PC-3 (cell line): ENCODE measurements at regions of chr3 and their contacts with region 1.

Region 1: GRCh38 chr3:189324538-189325138 is 152.9 kb downstream of the TPRG1 start:
- DNase-seq: peak; percentile 99
- ATAC-seq: peak; percentile 96
- H3K4me3 ChIP-seq: no peak overlapping the region
- H3K27ac ChIP-seq: peak overlapping the region; percentile 85
- H3K4me1 ChIP-seq: peaks cover 26% of the 10 kb centered on the region
- H3K27me3 ChIP-seq: no peaks in the 10 kb centered on the region
- CTCF ChIP-seq: no peak

Region 2: DNA sequence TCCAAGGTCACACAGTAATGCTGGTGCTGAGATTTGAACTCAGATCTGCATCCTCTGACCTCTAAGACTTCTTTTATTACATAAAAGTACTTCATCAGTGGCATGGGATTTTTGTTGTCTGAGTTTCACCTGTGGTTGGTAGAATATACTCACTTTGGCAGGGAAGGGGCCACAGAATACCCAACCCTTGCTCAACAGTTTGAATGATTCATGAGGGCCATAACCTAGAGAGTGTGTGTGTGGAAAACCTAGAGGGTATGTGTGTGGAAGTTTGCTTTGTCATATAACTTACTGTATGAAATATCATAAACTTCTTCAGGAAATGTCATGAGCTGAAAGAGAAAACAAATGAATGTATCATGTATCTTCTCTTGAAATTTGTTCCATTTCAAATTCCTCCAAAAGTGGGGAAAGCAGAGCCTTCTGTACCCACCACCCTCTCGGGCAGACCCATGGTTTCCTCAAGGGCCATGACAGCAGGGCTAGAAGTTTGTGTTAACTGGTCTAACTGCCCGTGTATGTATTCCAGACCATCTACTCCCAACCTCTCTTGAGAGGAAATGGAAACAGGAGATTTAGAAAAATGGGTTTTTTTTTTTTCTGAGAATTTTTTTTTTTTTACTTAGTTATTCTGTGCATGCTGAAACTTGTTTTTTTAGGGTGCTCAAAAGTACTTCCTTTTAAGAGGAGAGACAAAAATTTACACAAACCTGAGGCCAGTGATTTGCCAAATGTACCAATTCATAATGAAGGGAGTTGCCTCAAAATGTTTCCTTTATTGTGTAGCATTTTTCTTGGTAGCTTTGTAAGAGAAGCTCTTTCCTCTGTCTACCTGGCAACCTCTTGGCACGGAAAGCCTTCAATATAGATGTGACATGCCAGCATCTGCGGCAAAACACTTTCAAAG is 25.9 kb before region 1 on chr3:
- CTCF ChIA-PET with region 1: interaction called, 3 read pairs
- POLR2A ChIA-PET with region 1: interaction called, 3 read pairs
- intact Hi-C with region 1: loop called (anchors 1 kb)
- DNase-seq: peak; percentile 89
- ATAC-seq: peak; percentile 45
- H3K4me3 ChIP-seq: no peak overlapping the region
- H3K27ac ChIP-seq: peak overlapping the region; percentile 81
- H3K4me1 ChIP-seq: peaks cover 47% of the 10 kb centered on the region
- H3K27me3 ChIP-seq: no peaks in the 10 kb centered on the region
- CTCF ChIP-seq: no peak

Region 3: GRCh38 chr3:189383630-189384029 is 59.0 kb after region 1 on chr3:
- CTCF ChIA-PET with region 1: no interaction called
- POLR2A ChIA-PET with region 1: no interaction called
- intact Hi-C with region 1: no loop called
- DNase-seq: no peak
- ATAC-seq: no peak
- H3K4me3 ChIP-seq: no peak overlapping the region
- H3K27ac ChIP-seq: no peak overlapping the region
- H3K4me1 ChIP-seq: no peaks in the 10 kb centered on the region
- H3K27me3 ChIP-seq: no peaks in the 10 kb centered on the region
- CTCF ChIP-seq: no peak

Region 4: GRCh38 chr3:189394599-189395121 is 70.0 kb after region 1 on chr3:
- CTCF ChIA-PET with region 1: no interaction called
- POLR2A ChIA-PET with region 1: interaction called, 8 read pairs
- intact Hi-C with region 1: loop called (anchors 1 kb)
- DNase-seq: no peak
- ATAC-seq: no peak
- H3K4me3 ChIP-seq: no peak overlapping the region
- H3K27ac ChIP-seq: no peak overlapping the region
- H3K4me1 ChIP-seq: peaks cover 20% of the 10 kb centered on the region
- H3K27me3 ChIP-seq: no peaks in the 10 kb centered on the region
- CTCF ChIP-seq: no peak

Region 5: DNA sequence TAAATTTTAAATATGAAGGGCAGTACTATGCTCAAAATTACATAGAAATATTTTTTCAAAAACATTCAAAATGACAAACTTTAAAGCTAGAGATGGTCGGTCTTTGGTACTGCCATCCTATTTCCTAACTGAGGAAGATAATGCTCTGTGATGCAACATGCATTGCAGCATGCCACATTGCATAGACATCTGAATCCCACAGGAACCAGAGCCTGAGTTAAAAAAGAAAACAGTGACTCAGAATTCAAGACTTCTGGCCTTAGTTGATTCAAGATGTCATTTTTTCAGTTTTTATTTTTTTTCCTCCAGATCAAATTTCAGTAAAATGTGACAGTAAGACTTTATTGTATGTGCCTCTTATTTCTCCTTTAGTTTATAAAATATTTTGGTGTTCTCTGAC is 339.7 kb after region 1 on chr3:
- CTCF ChIA-PET with region 1: no interaction called
- POLR2A ChIA-PET with region 1: no interaction called
- intact Hi-C with region 1: loop called (anchors 10 kb)
- DNase-seq: peak; percentile 91
- ATAC-seq: peak; percentile 99
- H3K4me3 ChIP-seq: no peak overlapping the region
- H3K27ac ChIP-seq: peak overlapping the region; percentile 7; the same call in 1 of the 2 replicates
- H3K4me1 ChIP-seq: peaks cover 16% of the 10 kb centered on the region
- H3K27me3 ChIP-seq: no peaks in the 10 kb centered on the region
- CTCF ChIP-seq: no peak

Region 6: GRCh38 chr3:189937307-189938124 is 612.9 kb after region 1 on chr3:
- CTCF ChIA-PET with region 1: no interaction called
- POLR2A ChIA-PET with region 1: no interaction called
- intact Hi-C with region 1: loop called (anchors 1 kb)
- DNase-seq: peak; percentile 99
- ATAC-seq: peak; percentile 88
- H3K4me3 ChIP-seq: no peak overlapping the region
- H3K27ac ChIP-seq: peak overlapping the region; percentile 83
- H3K4me1 ChIP-seq: peaks cover 41% of the 10 kb centered on the region
- H3K27me3 ChIP-seq: no peaks in the 10 kb centered on the region
- CTCF ChIP-seq: no peak